BJ (cell line): ENCODE measurements at regions of chr12 and their contacts with region 1.

Region 1: GRCh38 chr12:63843721-63844390 is 644 bp upstream of the SRGAP1 start:
- DNase-seq: peak; percentile 76
- H3K4me3 ChIP-seq: peak overlapping the region; percentile 93
- H3K27me3 ChIP-seq: no peaks in the 10 kb centered on the region
- CTCF ChIP-seq: peak; percentile 86

Region 2: DNA sequence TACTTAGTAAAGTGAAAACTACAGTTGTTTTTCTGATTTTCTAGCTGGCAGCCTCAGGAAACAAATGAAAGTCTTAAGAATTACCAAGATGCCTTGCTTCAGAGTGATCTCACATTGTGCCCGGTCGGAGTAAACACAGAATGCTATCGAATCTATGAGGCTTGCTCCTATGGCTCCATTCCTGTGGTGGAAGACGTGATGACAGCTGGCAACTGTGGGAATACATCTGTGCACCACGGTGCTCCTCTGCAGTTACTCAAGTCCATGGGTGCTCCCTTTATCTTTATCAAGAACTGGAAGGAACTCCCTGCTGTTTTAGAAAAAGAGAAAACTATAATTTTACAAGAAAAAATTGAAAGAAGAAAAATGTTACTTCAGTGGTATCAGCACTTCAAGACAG is 35.2 kb before region 1 on chr12:
- CTCF ChIA-PET with region 1: no interaction called
- POLR2A ChIA-PET with region 1: no interaction called
- DNase-seq: no peak
- H3K4me3 ChIP-seq: no peak overlapping the region
- H3K27me3 ChIP-seq: no peaks in the 10 kb centered on the region
- CTCF ChIP-seq: no peak

Region 3: DNA sequence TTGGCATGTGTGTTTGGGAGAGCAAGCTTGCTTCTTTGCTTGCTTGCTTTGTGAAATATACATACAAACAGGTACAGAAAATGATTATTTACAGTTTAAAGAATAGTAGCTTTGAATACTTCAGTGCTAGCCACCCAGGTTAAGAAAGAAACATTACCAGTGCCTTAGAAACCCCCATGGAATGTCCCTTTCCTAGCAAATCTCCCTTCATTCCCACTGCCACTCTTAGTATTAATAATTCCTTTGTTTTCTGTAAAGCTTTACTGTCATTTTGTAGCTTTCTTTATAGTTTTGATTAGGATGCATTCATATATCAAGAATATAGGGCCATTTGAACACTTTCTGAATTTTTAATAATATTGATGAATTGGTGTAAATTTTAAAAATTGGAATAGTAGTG is 10.1 kb after region 1 on chr12:
- CTCF ChIA-PET with region 1: interaction called, 10 read pairs
- POLR2A ChIA-PET with region 1: no interaction called
- DNase-seq: no peak
- H3K4me3 ChIP-seq: no peak overlapping the region
- H3K27me3 ChIP-seq: no peaks in the 10 kb centered on the region
- CTCF ChIP-seq: no peak

Region 4: DNA sequence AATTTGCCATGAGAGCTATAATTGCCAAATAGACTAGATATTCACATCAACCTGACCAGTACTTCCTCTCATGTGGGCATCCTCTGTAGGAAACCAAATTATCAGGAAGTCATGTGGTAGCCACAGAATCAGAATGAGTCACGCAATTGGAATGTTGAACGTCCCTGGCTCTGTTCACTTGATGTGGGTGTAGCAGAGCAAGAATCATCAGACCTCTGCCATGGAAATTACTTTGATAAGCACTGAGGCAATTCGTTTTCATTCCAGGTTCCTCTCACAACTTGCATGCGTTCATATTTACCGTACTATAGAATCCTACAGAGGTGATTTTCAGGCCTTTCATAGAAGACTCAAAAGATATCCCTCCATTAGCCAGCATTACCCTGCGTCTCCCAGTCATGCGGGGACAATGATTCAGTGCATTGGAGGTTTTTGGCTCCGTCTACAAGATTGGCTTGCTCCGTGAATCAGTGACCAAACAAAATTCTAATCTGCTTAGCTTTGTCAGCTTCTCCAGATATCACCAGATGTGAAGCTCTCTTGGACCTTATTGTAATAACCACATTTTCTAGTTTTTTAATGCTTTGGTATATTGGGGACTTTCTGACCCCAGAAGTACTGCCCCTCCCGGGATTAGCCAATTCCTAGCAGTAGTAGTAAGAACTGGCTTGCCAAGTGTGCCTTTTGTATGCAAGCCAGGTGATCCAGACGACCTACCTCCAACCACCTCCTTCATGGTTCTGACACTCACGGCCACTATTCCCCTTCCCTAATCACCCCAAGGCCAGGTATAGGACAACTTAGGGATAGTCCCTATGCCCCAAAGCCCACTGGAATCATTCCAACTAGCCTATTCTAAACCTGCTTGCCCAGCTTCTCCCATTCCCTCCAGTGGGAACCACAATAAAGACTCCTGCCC is 244.8 kb after region 1 on chr12:
- CTCF ChIA-PET with region 1: interaction called, 23 read pairs
- POLR2A ChIA-PET with region 1: no interaction called
- DNase-seq: peak; percentile 76
- H3K4me3 ChIP-seq: no peak overlapping the region
- H3K27me3 ChIP-seq: no peaks in the 10 kb centered on the region
- CTCF ChIP-seq: no peak

Region 5: DNA sequence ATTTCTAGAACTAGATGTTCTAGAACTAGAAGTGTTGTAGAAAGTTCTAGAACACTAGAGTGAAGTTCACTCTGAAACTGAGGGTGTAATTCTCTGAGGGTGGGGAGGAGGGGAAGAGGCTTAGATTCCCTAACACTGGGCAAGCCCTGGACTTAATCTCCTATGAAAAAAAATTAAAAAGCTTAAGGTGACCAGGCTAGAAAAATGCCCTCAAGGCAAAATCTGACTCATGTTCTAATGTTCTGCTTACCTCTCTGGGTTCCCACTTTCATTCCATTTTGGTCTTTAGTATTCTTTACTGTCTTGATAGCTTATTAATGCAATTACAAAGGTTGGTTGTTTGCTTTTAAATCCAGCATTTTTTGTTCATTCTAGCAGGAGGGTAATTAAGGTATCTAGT is 276.7 kb after region 1 on chr12:
- CTCF ChIA-PET with region 1: no interaction called
- POLR2A ChIA-PET with region 1: interaction called, 14 read pairs
- DNase-seq: no peak
- H3K4me3 ChIP-seq: no peak overlapping the region
- H3K27me3 ChIP-seq: no peaks in the 10 kb centered on the region
- CTCF ChIP-seq: no peak

Region 6: GRCh38 chr12:64218597-64218996 is 374.7 kb after region 1 on chr12:
- CTCF ChIA-PET with region 1: interaction called, 10 read pairs
- POLR2A ChIA-PET with region 1: no interaction called
- DNase-seq: no peak
- H3K4me3 ChIP-seq: no peak overlapping the region
- H3K27me3 ChIP-seq: no peaks in the 10 kb centered on the region
- CTCF ChIP-seq: no peak

Region 7: DNA sequence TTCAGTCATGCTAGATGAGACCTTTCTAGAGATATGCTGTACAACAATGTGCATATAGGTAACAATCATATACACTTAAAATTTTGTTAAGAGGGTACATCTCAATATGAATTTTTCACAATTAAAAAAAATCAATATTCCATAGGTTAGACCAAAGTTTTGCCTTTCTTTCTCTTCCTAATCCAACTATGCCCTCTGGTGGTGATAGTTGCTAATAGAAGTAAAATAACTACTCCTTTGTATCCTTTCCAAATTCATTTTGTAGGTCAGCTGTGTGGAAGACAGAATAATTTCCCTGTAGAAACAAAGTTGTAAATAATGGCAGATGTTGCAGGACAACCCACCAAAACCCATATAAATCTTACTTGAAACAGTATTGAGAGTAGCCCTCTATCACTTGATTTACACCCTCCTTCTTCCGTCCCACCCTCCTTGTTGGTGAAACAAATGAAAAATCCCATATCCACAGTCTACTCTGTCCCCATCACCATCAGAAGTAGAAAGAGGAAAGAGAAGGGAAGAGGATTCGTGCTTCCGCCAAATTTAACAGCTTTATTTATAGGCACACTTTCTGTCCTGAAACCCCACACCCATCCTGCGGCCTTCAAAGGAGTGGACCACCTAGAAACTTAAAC is 412.4 kb after region 1 on chr12:
- CTCF ChIA-PET with region 1: interaction called, 52 read pairs
- POLR2A ChIA-PET with region 1: no interaction called
- DNase-seq: no peak
- H3K4me3 ChIP-seq: no peak overlapping the region
- H3K27me3 ChIP-seq: no peaks in the 10 kb centered on the region
- CTCF ChIP-seq: peak; percentile 55